ENCODE measurements at regions of chr1 and their contacts with region 1.

Region 1: GRCh38 chr1:89114662-89115061 is 11.3 kb downstream of the GBP2 start:
- DNase-seq: no peak
- H3K4me3 Mint-ChIP-seq: no peak overlapping the region
- H3K27ac Mint-ChIP-seq: no peak overlapping the region
- H3K4me1 Mint-ChIP-seq: peaks cover 38% of the 10 kb centered on the region
- H3K27me3 Mint-ChIP-seq: no peaks in the 10 kb centered on the region

Region 2: GRCh38 chr1:89104147-89104546 is 10.5 kb before region 1 on chr1:
- CTCF ChIA-PET with region 1: interaction called, 5 read pairs
- intact Hi-C with region 1: loop called (anchors 1 kb)
- DNase-seq: no peak
- H3K4me3 Mint-ChIP-seq: no peak overlapping the region
- H3K27ac Mint-ChIP-seq: peak overlapping the region; percentile 88
- H3K4me1 Mint-ChIP-seq: peaks cover 41% of the 10 kb centered on the region
- H3K27me3 Mint-ChIP-seq: no peaks in the 10 kb centered on the region

Measured in activated naive CD4-positive, alpha-beta T cell treated with anti-CD3 and anti-CD28 coated beads for 36 hours (primary cell).